ENCODE measurements at regions of chr19 and their contacts with region 1.

Region 1: DNA sequence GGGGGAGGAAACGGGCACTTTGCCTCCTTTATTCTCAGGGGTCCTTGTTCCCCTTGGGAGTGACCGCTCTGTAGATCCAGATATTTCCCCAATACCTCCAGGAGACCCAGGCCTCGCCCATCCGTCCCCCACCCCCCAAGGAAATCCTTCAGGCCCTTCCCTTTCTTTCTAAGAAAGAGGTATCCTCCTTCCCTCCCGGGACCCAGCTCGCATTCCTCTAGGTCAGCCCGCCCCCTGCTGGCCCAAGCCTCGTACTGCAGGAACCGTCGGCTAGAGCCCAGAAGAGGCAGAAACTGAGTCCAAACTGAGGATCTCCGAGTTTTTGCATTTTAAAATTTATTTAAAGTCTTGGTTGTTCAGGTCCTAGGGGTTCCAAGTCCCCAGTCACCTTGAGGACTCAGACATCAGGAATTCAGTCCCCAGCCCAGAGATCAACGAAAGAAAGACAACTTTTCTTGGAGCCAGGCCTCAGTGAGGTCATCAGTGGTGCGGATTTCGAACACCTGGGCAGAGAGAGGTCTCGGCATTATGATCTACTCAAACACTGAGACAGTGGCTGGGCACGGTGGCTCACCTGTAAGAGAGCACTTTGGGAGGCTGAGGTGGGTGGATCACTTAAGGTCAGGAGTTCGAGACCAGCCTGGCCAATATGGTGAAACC is 7.5 kb upstream of the LRFN1 start:
- DNase-seq: peak in 2 of 3 donors; percentile 66 to 75
- H3K4me3 ChIP-seq: no peak overlapping the region
- H3K27ac ChIP-seq: no peak overlapping the region
- H3K4me1 ChIP-seq: peaks cover 0 to 45% (median 29%) of the 10 kb centered on the region in 4 experiments
- H3K27me3 ChIP-seq: no peaks in the 10 kb centered on the region

Region 2: DNA sequence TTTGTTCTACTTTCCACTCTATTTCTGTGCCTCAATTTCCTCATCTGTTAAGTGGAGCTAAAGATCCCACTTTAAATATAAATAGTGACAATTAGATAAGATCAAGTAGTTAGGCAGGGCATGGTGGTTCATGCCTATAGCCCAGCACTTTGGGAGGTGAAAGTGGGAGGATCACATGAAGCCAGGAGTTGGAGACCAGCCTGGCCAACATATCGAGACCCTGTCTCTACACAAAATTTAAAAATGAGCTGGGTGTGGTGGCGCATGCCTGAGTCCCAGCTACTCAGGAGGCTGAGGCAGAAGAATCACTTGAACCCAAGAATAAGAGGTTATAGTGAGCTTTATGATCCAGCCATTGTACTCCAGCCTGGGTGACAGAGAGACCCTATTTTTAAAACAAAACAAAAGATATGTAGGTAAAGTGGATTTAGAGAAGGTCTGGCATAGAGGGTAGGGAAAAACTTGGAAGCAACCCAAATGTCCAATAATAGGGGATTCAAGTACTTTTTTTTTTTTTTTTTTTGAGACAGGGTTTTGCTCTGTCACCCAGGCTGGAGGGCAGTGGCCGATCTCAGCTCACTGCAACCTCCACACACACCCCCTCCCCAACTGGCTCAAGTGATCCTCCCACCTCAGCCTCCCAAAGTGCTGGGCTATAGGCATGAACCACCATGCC is 208.5 kb before region 1 on chr19:
- CTCF ChIA-PET with region 1: interaction called, 13 read pairs
- POLR2A ChIA-PET with region 1: interaction called, 4 read pairs
- DNase-seq: no peak
- H3K4me3 ChIP-seq: no peak overlapping the region
- H3K27ac ChIP-seq: no peak overlapping the region
- H3K4me1 ChIP-seq: peaks cover 0 to 3% (median 0%) of the 10 kb centered on the region in 4 experiments
- H3K27me3 ChIP-seq: no peaks in the 10 kb centered on the region

Region 3: GRCh38 chr19:39212375-39212742 is 115.8 kb before region 1 on chr19:
- CTCF ChIA-PET with region 1: interaction called, 10 read pairs
- POLR2A ChIA-PET with region 1: interaction called, 4 read pairs
- DNase-seq: peak; percentile 42 to 67 (median 61)
- H3K4me3 ChIP-seq: no peak overlapping the region
- H3K27ac ChIP-seq: no peak overlapping the region
- H3K4me1 ChIP-seq: no peaks in the 10 kb centered on the region
- H3K27me3 ChIP-seq: peaks cover 0 to 6% (median 0%) of the 10 kb centered on the region in 5 experiments

Region 4: GRCh38 chr19:39223681-39224279 is 104.4 kb before region 1 on chr19:
- CTCF ChIA-PET with region 1: interaction called, 39 read pairs
- POLR2A ChIA-PET with region 1: no interaction called
- DNase-seq: peak; percentile 29 to 69 (median 67)
- H3K4me3 ChIP-seq: no peak overlapping the region
- H3K27ac ChIP-seq: no peak overlapping the region
- H3K4me1 ChIP-seq: peaks cover 0 to 7% (median 0%) of the 10 kb centered on the region in 4 experiments
- H3K27me3 ChIP-seq: peaks cover 0 to 3% (median 0%) of the 10 kb centered on the region in 5 experiments

Region 5: DNA sequence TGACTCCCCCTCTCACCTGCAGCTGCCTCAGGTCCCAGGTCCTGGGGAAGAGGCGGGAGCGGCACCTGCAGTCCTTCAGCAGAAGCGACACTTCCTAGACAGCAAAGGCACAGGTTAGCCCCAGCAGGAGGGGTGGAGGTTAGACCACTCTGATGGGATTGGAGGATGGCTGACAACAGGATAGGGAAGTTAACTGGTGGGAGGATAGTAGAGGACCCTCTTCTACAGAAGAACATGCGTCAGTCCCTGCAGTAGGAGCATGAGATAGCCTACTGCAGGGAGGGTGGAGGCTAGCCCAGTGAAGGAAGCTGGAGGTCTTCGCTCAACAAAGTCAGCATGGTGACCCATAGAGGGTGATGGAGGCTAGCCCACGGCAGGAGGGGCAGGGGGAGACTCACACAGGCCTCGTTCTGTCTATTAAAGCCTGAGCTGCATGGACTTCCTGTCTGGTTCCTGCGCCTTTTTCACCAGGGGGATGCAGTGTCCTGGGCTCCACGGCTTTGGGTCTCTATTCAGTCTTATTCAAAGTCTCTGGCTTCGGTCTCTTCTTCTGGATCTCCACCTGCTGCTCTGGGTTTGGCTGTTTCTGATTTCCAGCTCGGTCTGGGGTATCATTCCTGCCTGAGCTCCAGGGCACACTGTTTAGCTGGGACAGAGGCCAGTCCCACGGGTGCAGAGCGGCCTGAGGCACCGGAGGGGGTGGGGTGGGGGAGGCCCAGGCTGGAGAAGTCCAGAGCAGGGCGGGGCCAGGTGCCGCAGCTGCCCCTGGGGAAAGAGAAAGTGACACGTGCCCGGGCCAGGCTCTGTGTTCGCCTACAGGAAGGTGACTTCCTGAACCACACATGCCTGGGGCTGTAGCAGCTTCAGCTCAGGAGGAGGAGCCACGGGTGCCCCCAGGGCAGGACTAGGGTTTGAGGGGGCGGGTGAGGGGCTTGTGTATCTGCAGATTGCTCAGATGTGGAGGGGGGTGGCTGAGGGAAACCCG is 90.7 kb before region 1 on chr19:
- CTCF ChIA-PET with region 1: interaction called, 13 read pairs
- POLR2A ChIA-PET with region 1: interaction called, 3 read pairs
- DNase-seq: peak; percentile 43 to 70 (median 60)
- H3K4me3 ChIP-seq: peak overlapping the region in 3 of 7 experiments; percentile 8 to 51 (median 51)
- H3K27ac ChIP-seq: no peak overlapping the region
- H3K4me1 ChIP-seq: peaks cover 0 to 28% (median 16%) of the 10 kb centered on the region in 4 experiments
- H3K27me3 ChIP-seq: no peaks in the 10 kb centered on the region